ENCODE measurements at regions of chr5 and their contacts with region 1.

Region 1: DNA sequence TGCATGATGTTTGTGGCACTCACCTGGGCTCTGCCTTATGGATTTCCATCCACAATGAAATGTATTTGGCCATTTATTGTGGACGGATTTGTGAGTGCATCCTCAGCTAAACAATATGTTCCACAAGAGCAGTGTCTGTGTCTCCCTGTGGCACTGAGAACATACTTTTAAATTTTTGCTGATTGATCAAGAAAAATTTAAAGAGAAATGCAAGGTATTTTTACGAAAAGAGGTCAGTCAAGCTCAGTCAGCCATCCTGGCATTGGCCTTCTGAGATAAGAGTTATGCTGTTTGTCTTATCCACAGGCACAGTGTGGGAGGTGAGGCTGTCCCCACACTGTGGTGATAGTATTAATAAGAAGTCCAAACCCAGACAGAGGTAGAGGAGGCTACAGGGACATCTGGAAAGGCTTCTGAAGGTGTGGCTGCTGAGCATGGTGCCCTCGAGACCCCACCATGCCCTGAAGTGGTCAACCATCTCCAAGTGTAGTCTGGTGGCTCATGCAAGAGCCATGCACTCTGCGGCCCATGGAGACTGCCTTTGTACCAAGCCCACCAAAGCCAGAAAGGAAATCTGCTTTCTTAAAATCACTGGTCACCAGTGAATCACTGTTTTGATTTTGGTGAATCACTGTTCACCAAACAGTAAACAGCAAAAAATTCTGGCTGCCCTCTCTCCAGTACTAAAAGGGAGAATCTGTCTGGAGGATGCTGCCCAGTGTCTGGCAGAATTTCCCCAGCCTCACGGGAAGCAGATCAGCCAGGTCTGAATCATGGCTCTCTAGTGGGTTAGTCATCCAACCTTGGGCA is 28.8 kb downstream of the SPOCK1 start:
- DNase-seq: peak; percentile 45 to 77
- ATAC-seq: peak; percentile 71 to 86
- H3K4me3 ChIP-seq: no peak overlapping the region
- H3K27ac ChIP-seq: peak overlapping the region in 2 of 4 donors; percentile 57 to 73
- H3K4me1 ChIP-seq: peaks cover 0 to 11% of the 10 kb centered on the region in 2 donors
- H3K27me3 ChIP-seq: no peaks in the 10 kb centered on the region
- CTCF ChIP-seq: no peak
- POLR2A ChIP-seq: no peak

Region 2: DNA sequence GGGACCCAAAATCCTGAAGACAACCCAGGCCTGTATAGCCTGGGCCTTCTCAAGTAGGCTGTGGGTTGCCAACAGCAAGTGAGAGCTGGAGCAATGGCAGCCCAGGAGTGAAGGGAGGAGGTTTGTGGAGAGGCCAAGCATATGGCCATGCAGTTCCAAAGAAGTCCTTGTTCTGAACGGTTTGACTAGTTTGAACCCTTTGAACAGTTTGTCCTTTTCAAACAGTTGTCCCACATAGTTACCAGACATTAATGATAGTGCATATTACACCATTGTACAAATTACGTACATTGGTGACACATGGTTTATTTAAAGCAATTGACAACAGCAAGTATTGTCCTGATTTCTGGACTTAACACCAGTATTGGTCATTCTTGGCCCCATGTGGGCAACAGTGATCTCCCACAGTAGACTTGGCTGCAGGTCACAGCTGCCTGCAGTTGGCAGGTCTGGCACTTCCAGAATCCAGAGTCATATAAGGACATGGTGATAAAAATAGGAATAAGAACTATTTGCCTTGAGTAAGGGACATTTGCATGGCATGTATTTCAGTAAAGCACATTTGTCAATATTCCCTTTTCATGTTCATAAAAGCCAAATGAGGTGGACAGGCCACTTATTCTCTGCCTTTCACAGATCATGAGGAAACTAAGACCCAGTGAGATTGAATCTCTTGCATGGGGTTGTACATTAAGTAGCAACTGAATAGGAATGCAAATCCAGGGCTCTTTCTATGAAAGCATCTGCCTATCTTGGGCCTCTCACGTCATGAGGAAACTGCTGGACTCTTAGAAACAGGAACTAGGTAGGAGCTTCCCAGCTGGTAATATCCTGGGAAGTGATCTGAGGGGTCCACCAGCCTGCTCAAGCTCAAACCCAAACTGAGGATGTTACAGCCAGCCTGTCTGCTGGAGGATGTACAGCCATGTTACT is 1605.5 kb before region 1 on chr5:
- in situ Hi-C with region 1: no loop called
- intact Hi-C with region 1: loop called (anchors 10 kb)
- DNase-seq: peak; percentile 18 to 67
- ATAC-seq: peak; percentile 75 to 88
- H3K4me3 ChIP-seq: no peak overlapping the region
- H3K27ac ChIP-seq: peak overlapping the region; percentile 40 to 69 (median 54)
- H3K4me1 ChIP-seq: no peaks in the 10 kb centered on the region
- H3K27me3 ChIP-seq: no peaks in the 10 kb centered on the region
- CTCF ChIP-seq: no peak
- POLR2A ChIP-seq: no peak

Region 3: GRCh38 chr5:137051165-137051564 is 419.2 kb before region 1 on chr5:
- in situ Hi-C with region 1: no loop called
- intact Hi-C with region 1: no loop called
- DNase-seq: no peak
- ATAC-seq: no peak
- H3K4me3 ChIP-seq: no peak overlapping the region
- H3K27ac ChIP-seq: no peak overlapping the region
- H3K4me1 ChIP-seq: no peaks in the 10 kb centered on the region
- H3K27me3 ChIP-seq: no peaks in the 10 kb centered on the region
- CTCF ChIP-seq: no peak
- POLR2A ChIP-seq: no peak

Region 4: GRCh38 chr5:137393196-137393993 is 76.9 kb before region 1 on chr5:
- in situ Hi-C with region 1: no loop called
- intact Hi-C with region 1: loop called (anchors 2 kb)
- DNase-seq: peak in 1 of 2 donors; percentile 24
- ATAC-seq: no peak
- H3K4me3 ChIP-seq: no peak overlapping the region
- H3K27ac ChIP-seq: no peak overlapping the region
- H3K4me1 ChIP-seq: peaks cover 12 to 27% of the 10 kb centered on the region in 2 donors
- H3K27me3 ChIP-seq: no peaks in the 10 kb centered on the region
- CTCF ChIP-seq: no peak
- POLR2A ChIP-seq: no peak